Activated CD4-positive, alpha-beta memory T cell treated with anti-CD3 and anti-CD28 coated beads for 36 hours (primary cell): ENCODE measurements at regions of chr5 and their contacts with region 1.

Region 1: GRCh38 chr5:95961617-95962474 is at the start of gene ELL2:
- DNase-seq: peak; percentile 99
- H3K4me3 Mint-ChIP-seq: peak within 1 kb of the TSS; percentile 98
- H3K27ac Mint-ChIP-seq: peak within 1 kb of the TSS; percentile 98
- H3K4me1 Mint-ChIP-seq: peaks cover 62% of the 10 kb centered on the region
- H3K27me3 Mint-ChIP-seq: no peaks in the 10 kb centered on the region
- total RNA-seq, gene ELL2: 127 to 132 TPM

Region 2: GRCh38 chr5:95646554-95647431 is 315.1 kb before region 1 on chr5 and contains the start of gene RFESD:
- CTCF ChIA-PET with region 1: no interaction called
- POLR2A ChIA-PET with region 1: no interaction called
- intact Hi-C with region 1: loop called (anchors 2 kb)
- DNase-seq: peak; percentile 98
- H3K4me3 Mint-ChIP-seq: peak within 1 kb of the TSS; percentile 78
- H3K27ac Mint-ChIP-seq: peak within 1 kb of the TSS; percentile 89
- H3K4me1 Mint-ChIP-seq: peaks cover 25% of the 10 kb centered on the region
- H3K27me3 Mint-ChIP-seq: no peaks in the 10 kb centered on the region
- total RNA-seq, gene RFESD: 6.9 to 8.8 TPM

Region 3: GRCh38 chr5:95996904-95997723 is 35.3 kb after region 1 on chr5:
- CTCF ChIA-PET with region 1: interaction called, 3 read pairs
- POLR2A ChIA-PET with region 1: no interaction called
- intact Hi-C with region 1: loop called (anchors 2 kb)
- DNase-seq: no peak
- H3K4me3 Mint-ChIP-seq: no peak overlapping the region
- H3K27ac Mint-ChIP-seq: peak overlapping the region; percentile 2
- H3K4me1 Mint-ChIP-seq: peaks cover 8% of the 10 kb centered on the region
- H3K27me3 Mint-ChIP-seq: peaks cover 13% of the 10 kb centered on the region

Region 4: GRCh38 chr5:96220610-96221390 is 259.0 kb after region 1 on chr5:
- CTCF ChIA-PET with region 1: no interaction called
- POLR2A ChIA-PET with region 1: no interaction called
- intact Hi-C with region 1: loop called (anchors 1 kb)
- DNase-seq: peak; percentile 37
- H3K4me3 Mint-ChIP-seq: no peak overlapping the region
- H3K27ac Mint-ChIP-seq: peak overlapping the region; percentile 78
- H3K4me1 Mint-ChIP-seq: peaks cover 22% of the 10 kb centered on the region
- H3K27me3 Mint-ChIP-seq: peaks cover 3% of the 10 kb centered on the region

Region 5: GRCh38 chr5:96235008-96235910 is 273.4 kb after region 1 on chr5:
- CTCF ChIA-PET with region 1: no interaction called
- POLR2A ChIA-PET with region 1: no interaction called
- intact Hi-C with region 1: no loop called
- DNase-seq: no peak
- H3K4me3 Mint-ChIP-seq: no peak overlapping the region
- H3K27ac Mint-ChIP-seq: no peak overlapping the region
- H3K4me1 Mint-ChIP-seq: no peaks in the 10 kb centered on the region
- H3K27me3 Mint-ChIP-seq: peaks cover 7% of the 10 kb centered on the region

Region 6: GRCh38 chr5:96662725-96663513 is 701.1 kb after region 1 on chr5:
- CTCF ChIA-PET with region 1: no interaction called
- POLR2A ChIA-PET with region 1: no interaction called
- intact Hi-C with region 1: loop called (anchors 2 kb)
- DNase-seq: peak; percentile 94
- H3K4me3 Mint-ChIP-seq: peak overlapping the region; percentile 99
- H3K27ac Mint-ChIP-seq: peak overlapping the region; percentile 98
- H3K4me1 Mint-ChIP-seq: peaks cover 45% of the 10 kb centered on the region
- H3K27me3 Mint-ChIP-seq: peaks cover 14% of the 10 kb centered on the region